Ascending aorta (tissue), 2 donors: ENCODE measurements at regions of chr20 and their contacts with region 1.

Region 1: DNA sequence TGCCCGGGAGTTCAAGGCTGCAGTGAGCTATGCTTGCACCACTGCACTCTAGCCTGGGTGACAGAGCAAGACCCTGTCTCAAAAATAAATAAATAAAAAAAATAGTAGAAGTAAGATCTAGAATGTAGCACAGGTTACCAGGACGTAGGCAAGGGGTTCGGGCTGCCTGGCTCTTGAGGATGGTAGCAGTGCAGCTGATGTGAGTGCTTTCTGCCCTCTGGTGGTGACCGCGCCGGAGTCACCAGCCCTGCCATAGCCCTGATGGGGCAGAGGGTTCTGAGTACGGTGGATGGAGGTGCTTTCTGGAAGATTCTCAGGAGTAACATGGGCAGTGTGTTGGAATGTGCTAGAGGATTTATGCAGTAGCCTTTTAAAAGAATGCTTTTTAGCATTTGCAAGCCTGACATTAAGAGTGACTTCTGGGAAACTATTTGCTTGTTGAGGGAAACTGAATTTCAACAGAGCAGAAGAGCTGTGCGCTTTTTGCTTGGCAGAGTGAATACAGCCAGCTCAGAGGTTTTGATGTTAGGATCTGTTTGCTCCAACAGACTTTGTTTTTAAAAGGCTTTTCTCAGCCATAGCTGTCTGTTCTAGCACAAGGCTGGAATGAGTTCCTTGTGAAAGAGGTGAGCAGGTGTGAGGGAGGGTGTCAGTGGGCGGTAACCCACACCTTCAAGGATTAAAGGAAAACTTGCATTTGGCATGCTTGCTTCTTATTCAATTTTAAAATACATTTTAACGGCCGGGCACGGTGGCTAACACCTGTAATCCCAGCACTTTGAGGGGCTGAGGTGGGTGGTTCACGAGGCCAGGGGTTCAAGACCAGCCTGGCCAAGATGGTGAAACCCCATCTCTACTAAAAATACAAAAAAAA is 65.9 kb downstream of the PTPN1 start:
- DNase-seq: peak in 1 of 2 donors; percentile 78
- H3K4me3 ChIP-seq: no peak overlapping the region
- H3K27ac ChIP-seq: peak overlapping the region in 1 of 2 donors; percentile 38
- H3K4me1 ChIP-seq: peaks cover 12 to 23% of the 10 kb centered on the region in 2 donors
- H3K27me3 ChIP-seq: no peaks in the 10 kb centered on the region
- CTCF ChIP-seq: peak; percentile 45 to 75 (median 65)

Region 2: GRCh38 chr20:50484276-50484976 is 91.7 kb before region 1 on chr20:
- intact Hi-C with region 1: loop called (anchors 5 kb)
- DNase-seq: no peak
- H3K4me3 ChIP-seq: peak overlapping the region; percentile 54 to 64
- H3K27ac ChIP-seq: peak overlapping the region; percentile 74 to 77
- H3K4me1 ChIP-seq: peaks cover 0 to 3% of the 10 kb centered on the region in 2 donors
- H3K27me3 ChIP-seq: no peaks in the 10 kb centered on the region
- CTCF ChIP-seq: no peak

Region 3: GRCh38 chr20:50540620-50541605 is 35.2 kb before region 1 on chr20:
- intact Hi-C with region 1: loop called (anchors 1 kb)
- DNase-seq: peak in 1 of 2 donors; percentile 80
- H3K4me3 ChIP-seq: peak overlapping the region; percentile 24 to 28
- H3K27ac ChIP-seq: peak overlapping the region; percentile 81 to 94
- H3K4me1 ChIP-seq: peaks cover 16 to 42% of the 10 kb centered on the region in 2 donors
- H3K27me3 ChIP-seq: no peaks in the 10 kb centered on the region
- CTCF ChIP-seq: no peak

Region 4: GRCh38 chr20:50561379-50562078 is 14.6 kb before region 1 on chr20:
- intact Hi-C with region 1: loop called (anchors 1 kb)
- DNase-seq: peak in 1 of 2 donors; percentile 87
- H3K4me3 ChIP-seq: peak overlapping the region in 1 of 2 donors; percentile 31
- H3K27ac ChIP-seq: peak overlapping the region; percentile 74 to 86
- H3K4me1 ChIP-seq: peaks cover 10 to 25% of the 10 kb centered on the region in 2 donors
- H3K27me3 ChIP-seq: no peaks in the 10 kb centered on the region
- CTCF ChIP-seq: no peak

Region 5: GRCh38 chr20:50601511-50602431 is 25.7 kb after region 1 on chr20:
- intact Hi-C with region 1: no loop called
- DNase-seq: no peak
- H3K4me3 ChIP-seq: no peak overlapping the region
- H3K27ac ChIP-seq: no peak overlapping the region
- H3K4me1 ChIP-seq: no peaks in the 10 kb centered on the region
- H3K27me3 ChIP-seq: no peaks in the 10 kb centered on the region
- CTCF ChIP-seq: no peak